ENCODE measurements at regions of chr6 and their contacts with region 1.

Region 1: GRCh38 chr6:53492860-53493634 is 51.9 kb downstream of the GCLC start:
- DNase-seq: no peak
- ATAC-seq: peak; percentile 56 to 73
- H3K4me3 ChIP-seq: no peak overlapping the region
- H3K27ac ChIP-seq: no peak overlapping the region
- H3K4me1 ChIP-seq: peaks cover 3% of the 10 kb centered on the region
- H3K27me3 ChIP-seq: no peaks in the 10 kb centered on the region
- CTCF ChIP-seq: peak; percentile 75

Region 2: GRCh38 chr6:53250176-53251032 is 242.6 kb before region 1 on chr6:
- intact Hi-C with region 1: no loop called
- DNase-seq: no peak
- ATAC-seq: no peak
- H3K4me3 ChIP-seq: no peak overlapping the region
- H3K27ac ChIP-seq: no peak overlapping the region
- H3K4me1 ChIP-seq: no peaks in the 10 kb centered on the region
- H3K27me3 ChIP-seq: no peaks in the 10 kb centered on the region
- CTCF ChIP-seq: no peak

Region 3: DNA sequence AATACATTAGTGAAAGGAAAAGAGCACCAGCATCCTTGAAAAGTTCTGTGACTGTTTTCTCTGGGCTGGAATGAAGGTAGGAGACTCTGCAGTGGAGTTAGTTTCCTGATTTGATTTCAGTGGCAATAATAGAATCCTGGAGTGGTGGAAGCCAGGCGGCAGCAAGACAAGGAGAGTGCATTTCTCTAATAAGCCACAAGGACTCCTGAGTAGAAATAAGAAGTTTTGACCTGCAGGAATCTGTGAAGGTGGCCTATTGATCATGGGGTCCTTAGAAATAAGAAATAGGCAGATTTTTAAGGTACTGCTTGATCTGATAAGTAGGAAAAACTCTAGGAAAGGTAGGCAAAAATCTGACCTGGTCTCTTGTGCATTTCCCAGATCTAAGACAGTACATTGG is 75.9 kb before region 1 on chr6:
- intact Hi-C with region 1: no loop called
- DNase-seq: no peak
- ATAC-seq: no peak
- H3K4me3 ChIP-seq: no peak overlapping the region
- H3K27ac ChIP-seq: no peak overlapping the region
- H3K4me1 ChIP-seq: peaks cover 5% of the 10 kb centered on the region
- H3K27me3 ChIP-seq: no peaks in the 10 kb centered on the region
- CTCF ChIP-seq: no peak

Region 4: GRCh38 chr6:53651764-53652401 is 158.8 kb after region 1 on chr6:
- intact Hi-C with region 1: loop called (anchors 10 kb)
- DNase-seq: peak; percentile 88
- ATAC-seq: peak; percentile 96 to 97
- H3K4me3 ChIP-seq: peak overlapping the region; percentile 60
- H3K27ac ChIP-seq: peak overlapping the region; percentile 47
- H3K4me1 ChIP-seq: peaks cover 14% of the 10 kb centered on the region
- H3K27me3 ChIP-seq: peaks cover 4% of the 10 kb centered on the region
- CTCF ChIP-seq: peak; percentile 49

Region 5: GRCh38 chr6:53710788-53711187 is 217.7 kb after region 1 on chr6:
- intact Hi-C with region 1: no loop called
- DNase-seq: no peak
- ATAC-seq: no peak
- H3K4me3 ChIP-seq: no peak overlapping the region
- H3K27ac ChIP-seq: no peak overlapping the region
- H3K4me1 ChIP-seq: no peaks in the 10 kb centered on the region
- H3K27me3 ChIP-seq: no peaks in the 10 kb centered on the region
- CTCF ChIP-seq: no peak

Region 6: DNA sequence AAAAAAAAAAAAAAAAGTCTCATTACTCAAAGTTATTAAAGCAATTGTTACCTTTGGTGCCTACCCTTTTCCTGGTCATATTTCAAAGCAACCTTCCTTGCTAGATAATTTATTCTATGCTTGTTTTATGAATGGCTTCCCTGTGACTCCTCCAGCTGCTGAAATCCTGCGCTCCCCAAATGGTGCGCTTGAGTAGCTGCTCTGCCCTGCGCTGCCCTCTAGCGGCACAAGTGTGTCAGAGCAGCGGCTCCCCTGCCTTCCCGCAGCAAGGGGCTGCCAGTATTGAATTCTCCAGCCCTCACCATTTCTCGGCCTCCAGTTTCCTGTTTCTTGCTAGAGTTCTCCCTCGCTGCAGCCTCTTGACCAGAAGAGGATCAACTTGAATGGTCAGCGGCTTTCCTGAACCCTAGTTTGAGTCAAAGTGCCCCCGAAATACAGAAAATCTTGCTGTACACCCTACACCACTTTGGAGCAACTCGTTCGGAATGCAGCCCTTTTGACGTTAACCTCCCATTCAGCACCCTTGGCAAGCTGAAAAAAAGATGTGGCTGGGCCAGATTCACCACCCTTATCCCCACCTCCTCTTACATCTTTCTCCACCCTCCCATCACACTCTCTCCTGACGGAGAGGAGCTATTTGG is 232.9 kb after region 1 on chr6:
- intact Hi-C with region 1: loop called (anchors 10 kb)
- DNase-seq: peak; percentile 84
- ATAC-seq: peak; percentile 87 to 94
- H3K4me3 ChIP-seq: no peak overlapping the region
- H3K27ac ChIP-seq: no peak overlapping the region
- H3K4me1 ChIP-seq: peaks cover 7% of the 10 kb centered on the region
- H3K27me3 ChIP-seq: no peaks in the 10 kb centered on the region
- CTCF ChIP-seq: peak; percentile 96